SK-N-SH (cell line): ENCODE measurements at regions of chr4 and their contacts with region 1.

Region 1: GRCh38 chr4:135371137-135371536 is 1169.5 kb upstream of the PABPC4L start:
- DNase-seq: peak; percentile 4
- H3K4me3 ChIP-seq: no peak overlapping the region
- H3K27ac ChIP-seq: no peak overlapping the region
- H3K4me1 ChIP-seq: no peaks in the 10 kb centered on the region; a peak in 1 of 4 replicates
- H3K27me3 ChIP-seq: no peaks in the 10 kb centered on the region
- CTCF ChIP-seq: peak; percentile 44
- EP300 ChIP-seq: no peak
- RAD21 ChIP-seq: peak; percentile 34

Region 2: GRCh38 chr4:135306538-135306937 is 64.6 kb before region 1 on chr4:
- CTCF ChIA-PET with region 1: no interaction called
- POLR2A ChIA-PET with region 1: no interaction called
- DNase-seq: no peak
- H3K4me3 ChIP-seq: no peak overlapping the region
- H3K27ac ChIP-seq: no peak overlapping the region
- H3K4me1 ChIP-seq: no peaks in the 10 kb centered on the region
- H3K27me3 ChIP-seq: no peaks in the 10 kb centered on the region
- CTCF ChIP-seq: no peak
- EP300 ChIP-seq: no peak
- RAD21 ChIP-seq: no peak

Region 3: GRCh38 chr4:136864580-136865185 is 1493.5 kb after region 1 on chr4:
- CTCF ChIA-PET with region 1: interaction called, 18 read pairs
- POLR2A ChIA-PET with region 1: no interaction called
- DNase-seq: peak; percentile 36
- H3K4me3 ChIP-seq: peak overlapping the region in 1 of 2 experiments; percentile 14; a peak in 1 of 4 replicates
- H3K27ac ChIP-seq: no peak overlapping the region
- H3K4me1 ChIP-seq: peaks cover 0 to 3% of the 10 kb centered on the region in 2 experiments; a peak in 2 of 4 replicates
- H3K27me3 ChIP-seq: no peaks in the 10 kb centered on the region
- CTCF ChIP-seq: peak; percentile 95
- EP300 ChIP-seq: no peak
- RAD21 ChIP-seq: peak; percentile 96